A673 (cell line): ENCODE measurements at regions of chrX and their contacts with region 1.

Region 1: DNA sequence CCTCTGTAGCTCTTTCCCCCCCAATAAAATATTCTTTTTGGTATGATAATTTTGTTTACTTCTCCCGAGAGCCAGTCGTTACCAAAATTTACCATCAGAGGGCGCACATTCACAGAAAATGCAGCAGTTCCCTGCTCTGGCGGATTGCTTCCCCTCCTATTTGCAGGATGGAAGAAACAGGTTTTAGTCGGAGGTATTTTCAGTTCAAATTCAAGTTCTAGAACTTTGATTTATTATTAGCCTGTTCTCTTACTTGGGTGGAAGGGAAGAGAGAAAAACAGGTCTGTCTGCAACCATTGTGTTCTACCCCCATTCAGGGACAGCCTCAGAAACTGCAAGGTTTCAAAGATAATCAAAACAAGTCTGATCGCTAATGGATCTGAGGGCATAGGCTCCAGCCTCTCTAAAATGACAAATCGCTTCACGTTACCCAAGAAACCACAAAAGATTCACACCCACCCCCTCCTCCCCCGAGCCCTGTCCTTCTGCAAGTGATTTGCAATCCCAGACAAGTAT is 263.8 kb upstream of the RPS6KA3 start:
- DNase-seq: peak; percentile 72
- H3K4me3 ChIP-seq: no peak overlapping the region
- H3K27ac ChIP-seq: no peak overlapping the region
- H3K4me1 ChIP-seq: peaks cover 10% of the 10 kb centered on the region
- H3K27me3 ChIP-seq: peaks cover 3% of the 10 kb centered on the region
- CTCF ChIP-seq: peak; percentile 85

Region 2: GRCh38 chrX:20252381-20253231 is 277.9 kb before region 1 on chrX:
- CTCF ChIA-PET with region 1: no interaction called
- POLR2A ChIA-PET with region 1: no interaction called
- intact Hi-C with region 1: loop called (anchors 5 kb)
- DNase-seq: peak; percentile 68
- H3K4me3 ChIP-seq: no peak overlapping the region
- H3K27ac ChIP-seq: no peak overlapping the region
- H3K4me1 ChIP-seq: no peaks in the 10 kb centered on the region
- H3K27me3 ChIP-seq: no peaks in the 10 kb centered on the region
- CTCF ChIP-seq: peak; percentile 74

Region 3: GRCh38 chrX:20500171-20500865 is 30.1 kb before region 1 on chrX:
- CTCF ChIA-PET with region 1: no interaction called
- POLR2A ChIA-PET with region 1: no interaction called
- intact Hi-C with region 1: no loop called
- DNase-seq: no peak
- H3K4me3 ChIP-seq: no peak overlapping the region
- H3K27ac ChIP-seq: no peak overlapping the region
- H3K4me1 ChIP-seq: no peaks in the 10 kb centered on the region
- H3K27me3 ChIP-seq: no peaks in the 10 kb centered on the region
- CTCF ChIP-seq: no peak

Region 4: GRCh38 chrX:21479695-21480270 is 949.3 kb after region 1 on chrX:
- CTCF ChIA-PET with region 1: interaction called, 4 read pairs
- POLR2A ChIA-PET with region 1: no interaction called
- intact Hi-C with region 1: loop called (anchors 1 kb)
- DNase-seq: peak; percentile 73
- H3K4me3 ChIP-seq: no peak overlapping the region
- H3K27ac ChIP-seq: no peak overlapping the region
- H3K4me1 ChIP-seq: no peaks in the 10 kb centered on the region
- H3K27me3 ChIP-seq: no peaks in the 10 kb centered on the region
- CTCF ChIP-seq: peak; percentile 72

Region 5: DNA sequence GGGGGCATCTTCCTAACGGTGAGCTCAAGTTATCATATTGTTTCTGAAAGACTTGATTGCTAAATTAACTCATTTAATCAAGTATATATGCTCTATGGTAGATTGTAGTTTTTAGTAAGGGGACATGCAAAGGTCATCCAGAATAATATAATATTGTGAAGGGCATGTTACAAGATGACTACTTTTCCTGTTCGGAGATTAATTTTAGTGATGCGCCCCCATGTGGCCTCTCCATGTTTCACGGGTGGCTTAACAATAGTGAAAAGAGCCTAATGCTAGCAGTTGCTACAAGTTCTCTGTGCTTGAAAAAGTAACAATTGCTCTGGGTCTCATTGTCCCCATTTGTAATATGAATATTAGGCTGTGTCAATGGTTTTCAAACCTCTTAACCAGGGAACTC is 1215.3 kb after region 1 on chrX:
- CTCF ChIA-PET with region 1: interaction called, 9 read pairs
- POLR2A ChIA-PET with region 1: no interaction called
- intact Hi-C with region 1: loop called (anchors 1 kb)
- DNase-seq: peak; percentile 52
- H3K4me3 ChIP-seq: no peak overlapping the region
- H3K27ac ChIP-seq: no peak overlapping the region
- H3K4me1 ChIP-seq: no peaks in the 10 kb centered on the region
- H3K27me3 ChIP-seq: peaks cover 14% of the 10 kb centered on the region
- CTCF ChIP-seq: peak; percentile 84

Region 6: DNA sequence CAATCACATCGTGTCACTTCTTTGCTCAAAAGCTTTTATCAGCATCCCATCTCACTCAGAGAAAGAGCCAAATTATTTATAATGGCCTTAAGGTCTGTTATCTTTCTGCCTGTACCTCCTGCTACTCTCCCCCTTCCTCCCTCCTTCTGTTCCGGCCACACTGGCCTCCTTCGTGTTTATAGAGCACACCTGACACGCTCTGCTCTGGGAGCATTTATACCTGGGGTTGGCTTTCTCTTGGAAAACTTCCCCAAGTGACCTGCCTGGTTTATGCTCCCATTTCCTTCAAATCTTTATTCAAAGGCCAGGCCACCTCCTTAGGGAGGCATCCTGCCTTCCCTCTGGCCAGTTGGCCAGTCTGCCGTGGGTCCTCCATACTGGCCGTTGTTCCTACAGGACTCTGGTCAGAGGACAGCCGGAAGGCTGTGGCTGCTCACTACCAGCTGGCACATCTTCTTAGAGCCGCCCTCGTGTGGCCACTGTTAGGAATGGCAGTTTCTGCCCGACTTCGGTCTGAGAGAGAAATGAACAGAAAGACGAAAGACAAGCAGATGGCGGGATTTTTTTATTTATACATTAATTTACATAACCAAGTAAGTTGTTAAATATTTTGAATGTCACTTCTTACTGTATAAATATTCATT is 1662.1 kb after region 1 on chrX:
- CTCF ChIA-PET with region 1: no interaction called
- POLR2A ChIA-PET with region 1: no interaction called
- intact Hi-C with region 1: loop called (anchors 10 kb)
- DNase-seq: peak; percentile 63
- H3K4me3 ChIP-seq: no peak overlapping the region
- H3K27ac ChIP-seq: no peak overlapping the region
- H3K4me1 ChIP-seq: no peaks in the 10 kb centered on the region
- H3K27me3 ChIP-seq: no peaks in the 10 kb centered on the region
- CTCF ChIP-seq: peak; percentile 79